Activated CD8-positive, alpha-beta T cell treated with anti-CD3 and anti-CD28 coated beads, Interleukin-2, amount 10 ng/mL, durations not matched to agents 7 days and 5 days (primary cell): ENCODE measurements at regions of chr2 and their contacts with region 1.

Region 1: DNA sequence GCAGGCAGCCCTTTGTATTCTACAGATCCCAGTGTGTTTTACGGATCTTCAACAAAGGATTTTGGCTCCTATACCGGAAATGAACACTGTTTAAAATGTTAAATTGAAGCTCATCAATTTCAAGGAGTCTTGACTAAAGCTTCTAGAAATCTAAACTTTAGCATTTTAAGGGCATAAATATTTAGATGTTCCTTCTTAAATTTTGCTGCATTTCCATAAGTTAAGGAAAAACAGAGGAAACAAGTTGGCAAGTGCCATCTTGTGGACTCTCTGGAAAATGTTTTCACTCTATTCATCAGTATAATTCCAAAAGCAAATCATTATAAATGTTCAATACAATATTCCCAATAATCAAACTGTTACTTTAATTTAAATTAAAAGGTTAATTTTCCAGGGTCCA is 19.6 kb downstream of the CHN1 start:
- DNase-seq: no peak
- ATAC-seq: no peak
- H3K4me3 Mint-ChIP-seq: no peak overlapping the region
- H3K27ac Mint-ChIP-seq: no peak overlapping the region
- H3K4me1 Mint-ChIP-seq: peaks cover 2% of the 10 kb centered on the region
- H3K27me3 Mint-ChIP-seq: peaks cover 11% of the 10 kb centered on the region

Region 2: GRCh38 chr2:174878537-174879147 is 107.0 kb before region 1 on chr2:
- CTCF ChIA-PET with region 1: no interaction called
- POLR2A ChIA-PET with region 1: no interaction called
- DNase-seq: no peak
- ATAC-seq: no peak
- H3K4me3 Mint-ChIP-seq: no peak overlapping the region
- H3K27ac Mint-ChIP-seq: no peak overlapping the region
- H3K4me1 Mint-ChIP-seq: no peaks in the 10 kb centered on the region
- H3K27me3 Mint-ChIP-seq: no peaks in the 10 kb centered on the region

Region 3: DNA sequence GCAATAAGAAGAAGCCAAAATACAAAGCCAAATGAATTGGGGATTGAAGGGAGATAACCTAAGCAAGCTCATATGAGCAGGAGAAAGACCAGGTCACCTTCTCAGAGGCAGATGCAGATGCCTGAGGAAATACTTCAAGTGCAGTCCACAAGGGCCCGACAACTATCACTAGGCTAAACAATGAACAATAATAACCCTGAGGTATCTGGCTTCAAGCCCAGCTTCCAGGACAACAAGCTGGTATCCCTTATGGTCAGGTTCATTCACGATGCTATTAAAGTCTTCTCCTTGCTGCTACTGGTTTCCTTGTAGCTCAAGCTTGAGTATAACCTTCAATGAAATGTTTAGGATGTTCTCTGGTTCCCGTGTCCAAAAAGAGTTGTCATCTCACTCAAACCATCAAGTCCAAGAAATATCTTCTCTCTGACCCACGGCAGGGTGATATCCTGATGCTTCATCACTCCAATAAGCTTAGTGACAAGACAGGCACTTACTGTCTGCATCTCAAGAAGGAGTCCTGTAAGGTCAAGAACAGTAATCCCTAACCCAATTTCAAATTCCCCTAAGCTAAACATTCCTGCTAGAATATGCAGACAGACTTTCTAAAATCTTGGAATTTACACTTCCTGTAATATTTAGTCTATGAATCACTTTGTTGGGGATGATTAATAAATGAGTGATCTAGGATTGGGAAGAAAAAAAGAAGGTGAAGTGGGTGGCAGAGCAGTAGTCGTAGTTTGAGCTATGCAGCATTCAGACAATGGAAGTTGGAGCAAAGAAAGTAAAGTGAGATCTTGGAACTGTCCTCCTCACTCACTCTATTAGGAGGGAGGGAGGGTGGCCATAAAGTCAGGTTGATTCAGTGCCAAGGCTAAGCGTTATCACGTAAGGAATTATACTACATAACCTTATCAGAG is 13.5 kb before region 1 on chr2:
- CTCF ChIA-PET with region 1: no interaction called
- POLR2A ChIA-PET with region 1: no interaction called
- DNase-seq: no peak
- ATAC-seq: no peak
- H3K4me3 Mint-ChIP-seq: no peak overlapping the region
- H3K27ac Mint-ChIP-seq: no peak overlapping the region
- H3K4me1 Mint-ChIP-seq: peaks cover 5% of the 10 kb centered on the region
- H3K27me3 Mint-ChIP-seq: peaks cover 16% of the 10 kb centered on the region

Region 4: GRCh38 chr2:175004980-175005732 is 19.5 kb after region 1 on chr2 and contains the start of gene CHN1:
- CTCF ChIA-PET with region 1: interaction called, 18 read pairs
- POLR2A ChIA-PET with region 1: no interaction called
- DNase-seq: peak; percentile 70
- ATAC-seq: peak; percentile 92
- H3K4me3 Mint-ChIP-seq: peak within 1 kb of the TSS; percentile 74
- H3K27ac Mint-ChIP-seq: no peak within 1 kb of the TSS
- H3K4me1 Mint-ChIP-seq: peaks cover 9% of the 10 kb centered on the region
- H3K27me3 Mint-ChIP-seq: peaks cover 59% of the 10 kb centered on the region
- total RNA-seq, gene CHN1: 0.11 to 0.50 TPM